WTC11 (cell line): ENCODE measurements at regions of chr1 and their contacts with region 1.

Region 1: DNA sequence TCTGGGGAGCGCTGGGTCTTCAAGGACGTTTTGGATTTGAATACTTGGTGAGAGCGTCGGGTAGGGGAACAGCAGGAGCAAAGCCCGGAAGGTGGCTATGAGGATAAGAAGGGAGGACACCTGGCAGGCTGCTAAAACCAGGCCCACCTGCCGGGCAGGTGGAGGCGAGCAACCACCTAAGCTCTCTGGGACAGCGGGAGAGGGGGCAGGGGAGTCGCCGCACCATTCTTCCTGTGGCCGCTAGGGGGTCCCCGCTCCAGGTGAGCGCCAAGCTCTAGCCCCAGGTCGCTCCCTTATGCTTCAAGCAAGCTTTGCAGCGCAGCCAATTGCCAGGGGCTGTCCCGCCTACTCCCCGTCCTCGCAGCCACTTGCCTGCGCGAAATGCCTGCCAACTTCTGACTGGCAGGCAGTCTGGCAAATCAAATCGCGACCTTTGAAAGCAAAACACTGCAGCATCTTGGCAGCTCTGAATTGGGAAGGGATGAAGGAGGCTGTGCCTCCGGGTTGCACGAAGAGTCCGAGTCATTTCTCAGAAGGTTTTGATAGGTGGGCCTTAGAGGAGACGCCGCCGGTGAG is at the start of gene NIPAL3:
- DNase-seq: peak; percentile 99
- ATAC-seq: peak; percentile 94
- H3K4me3 Mint-ChIP-seq: peak within 1 kb of the TSS; percentile 93
- H3K27ac Mint-ChIP-seq: peak within 1 kb of the TSS; percentile 89
- H3K4me1 Mint-ChIP-seq: peaks cover 36% of the 10 kb centered on the region
- H3K27me3 Mint-ChIP-seq: no peaks in the 10 kb centered on the region
- CTCF ChIP-seq: peak; percentile 86
- total RNA-seq, gene NIPAL3: 11.2 to 11.3 TPM (median 11.2 TPM) in 3 replicates

Region 2: DNA sequence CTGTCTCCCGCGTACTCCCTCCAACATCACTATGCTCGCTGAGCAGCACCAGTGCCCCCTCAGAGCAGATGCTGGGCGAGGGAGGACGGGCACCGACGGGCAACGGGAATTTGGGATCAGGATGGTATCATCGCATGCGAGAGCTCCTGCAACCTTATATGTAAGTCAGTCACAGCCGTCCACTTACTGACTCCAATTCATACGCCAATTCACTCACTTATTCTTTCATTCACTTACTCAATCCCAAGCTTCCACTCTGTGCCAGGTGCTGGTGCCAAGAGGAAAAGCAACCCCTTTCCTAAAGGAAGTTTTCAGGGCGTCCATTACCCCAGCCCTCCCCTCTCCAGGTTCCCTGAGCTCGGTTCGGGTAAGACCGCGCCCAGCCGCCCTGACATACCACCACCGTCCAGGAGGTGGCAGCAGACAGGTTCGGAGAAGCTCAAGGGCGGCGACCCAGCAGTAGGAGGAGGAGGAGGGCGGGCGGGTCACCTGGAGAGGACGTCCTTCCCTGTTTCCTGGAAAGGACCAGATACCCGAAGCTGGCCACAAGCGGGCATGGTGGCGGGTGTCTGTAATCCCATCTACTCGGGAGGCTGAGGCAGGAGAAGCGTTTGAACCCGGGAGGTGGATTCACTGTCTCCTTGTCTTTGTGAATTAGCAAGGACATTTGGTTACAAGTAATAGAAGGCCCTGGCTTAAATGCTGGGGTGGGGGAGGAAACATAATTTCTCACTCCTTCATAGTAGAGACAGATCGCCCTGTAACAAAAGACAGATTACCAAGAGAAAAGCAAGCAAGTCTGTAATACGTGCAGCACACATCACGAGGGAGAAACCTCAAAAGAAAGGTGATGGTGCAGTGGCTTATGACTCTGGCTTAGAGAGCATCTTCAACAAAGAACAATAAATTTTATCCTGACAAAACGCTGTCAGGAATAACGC is 264.9 kb before region 1 on chr1:
- CTCF ChIA-PET with region 1: interaction called, 17 read pairs
- POLR2A ChIA-PET with region 1: interaction called, 3 read pairs
- DNase-seq: peak; percentile 99
- ATAC-seq: peak; percentile 84
- H3K4me3 Mint-ChIP-seq: peak overlapping the region; percentile 63
- H3K27ac Mint-ChIP-seq: peak overlapping the region; percentile 99
- H3K4me1 Mint-ChIP-seq: peaks cover 46% of the 10 kb centered on the region
- H3K27me3 Mint-ChIP-seq: no peaks in the 10 kb centered on the region; the same call in 1 of the 2 replicates
- CTCF ChIP-seq: peak; percentile 88

Region 3: GRCh38 chr1:24426744-24427544 is 11.5 kb after region 1 on chr1:
- CTCF ChIA-PET with region 1: interaction called, 21 read pairs
- POLR2A ChIA-PET with region 1: no interaction called
- DNase-seq: no peak
- ATAC-seq: no peak
- H3K4me3 Mint-ChIP-seq: no peak overlapping the region
- H3K27ac Mint-ChIP-seq: no peak overlapping the region
- H3K4me1 Mint-ChIP-seq: peaks cover 22% of the 10 kb centered on the region
- H3K27me3 Mint-ChIP-seq: no peaks in the 10 kb centered on the region
- CTCF ChIP-seq: no peak

Region 4: DNA sequence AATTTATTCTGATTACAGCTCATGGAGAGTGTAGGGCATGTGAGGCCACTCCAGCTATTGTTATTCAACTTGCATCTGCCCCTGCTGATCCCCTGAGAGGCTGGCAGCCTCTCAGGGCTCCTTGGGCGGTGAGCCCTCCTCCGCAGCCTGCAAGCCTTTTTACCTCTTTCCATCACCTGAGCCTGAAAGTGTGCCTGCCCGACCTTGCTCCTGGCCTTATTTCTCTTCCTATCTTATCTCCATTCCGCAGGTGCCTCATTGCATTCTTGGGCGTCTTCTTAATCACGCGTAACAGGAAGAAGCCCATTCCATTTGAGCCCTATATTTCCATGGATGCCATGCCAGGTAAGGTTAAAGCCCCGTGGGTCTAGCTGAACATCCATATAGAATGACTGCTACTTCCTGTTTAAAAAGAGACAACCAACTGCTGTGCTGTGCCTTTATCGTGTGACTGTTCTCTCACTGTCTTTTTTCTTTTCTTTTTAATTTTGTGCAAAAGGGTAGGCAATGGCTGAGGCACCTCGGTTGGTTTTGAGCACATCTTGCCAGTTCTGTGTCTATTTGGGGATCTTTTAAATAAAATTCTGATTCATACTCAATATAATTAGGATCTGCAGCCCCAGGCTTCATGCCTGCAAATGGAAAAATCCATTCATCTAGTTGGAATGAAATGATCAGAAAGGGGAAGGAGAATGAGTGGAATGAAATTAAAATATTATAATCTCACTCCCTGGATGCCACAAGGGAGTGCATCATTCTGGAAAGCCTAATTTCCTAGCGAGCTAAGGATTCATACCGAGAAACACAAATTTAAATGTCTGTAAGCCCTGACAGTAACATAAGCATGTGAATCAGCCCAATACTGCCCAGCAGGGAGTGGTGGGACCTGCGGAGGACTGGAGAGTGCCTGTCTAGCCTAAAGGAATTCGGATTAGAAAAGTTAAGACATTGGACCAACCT is 48.6 kb after region 1 on chr1:
- CTCF ChIA-PET with region 1: interaction called, 18 read pairs
- POLR2A ChIA-PET with region 1: interaction called, 4 read pairs
- DNase-seq: peak; percentile 54
- ATAC-seq: peak; percentile 96
- H3K4me3 Mint-ChIP-seq: peak overlapping the region; percentile 54
- H3K27ac Mint-ChIP-seq: peak overlapping the region; percentile 98
- H3K4me1 Mint-ChIP-seq: peaks cover 51% of the 10 kb centered on the region
- H3K27me3 Mint-ChIP-seq: no peaks in the 10 kb centered on the region
- CTCF ChIP-seq: no peak

Region 5: DNA sequence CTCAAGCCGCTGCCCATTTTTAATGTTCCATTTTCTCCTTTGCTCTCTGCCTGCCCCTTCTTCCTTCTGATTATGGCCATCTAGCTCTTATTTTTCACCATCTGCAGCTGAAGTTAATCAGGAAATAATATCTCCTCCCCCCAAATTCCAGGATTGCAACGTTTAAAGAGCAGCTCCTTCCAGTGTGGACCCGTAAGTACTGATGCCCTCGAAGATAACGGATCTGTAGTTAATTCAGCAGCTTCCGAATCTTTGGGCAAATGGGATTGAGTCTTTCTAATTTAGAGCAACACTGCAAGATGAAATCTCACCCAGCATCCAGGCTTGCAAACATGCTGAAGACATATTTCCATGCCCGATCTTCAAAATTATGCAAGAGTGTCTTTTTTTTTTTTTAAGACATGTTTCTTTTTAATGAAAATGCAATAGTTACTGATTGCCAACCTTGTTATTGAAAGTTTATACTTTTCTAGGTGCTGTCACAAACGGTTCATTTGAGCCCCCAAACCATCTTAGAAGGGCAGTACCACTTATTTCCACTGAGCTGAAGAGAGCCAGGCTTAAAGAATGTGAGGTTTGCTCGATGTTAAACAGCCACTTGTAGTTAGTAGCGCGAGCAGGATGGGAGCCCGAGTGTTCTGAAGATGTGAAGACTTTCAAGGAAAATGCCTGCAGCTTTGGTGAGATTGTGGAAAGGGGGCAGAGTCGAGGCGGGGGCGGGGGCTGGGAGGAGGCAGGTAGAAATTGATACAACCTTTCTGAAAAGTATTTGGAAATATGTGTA is 76.3 kb after region 1 on chr1:
- CTCF ChIA-PET with region 1: interaction called, 14 read pairs
- POLR2A ChIA-PET with region 1: no interaction called
- DNase-seq: no peak
- ATAC-seq: peak; percentile 76
- H3K4me3 Mint-ChIP-seq: no peak overlapping the region
- H3K27ac Mint-ChIP-seq: no peak overlapping the region
- H3K4me1 Mint-ChIP-seq: peaks cover 5% of the 10 kb centered on the region; the same call in 1 of the 2 replicates
- H3K27me3 Mint-ChIP-seq: peaks cover 7% of the 10 kb centered on the region
- CTCF ChIP-seq: no peak

Region 6: GRCh38 chr1:24526940-24527542 is 111.6 kb after region 1 on chr1:
- CTCF ChIA-PET with region 1: interaction called, 12 read pairs
- POLR2A ChIA-PET with region 1: no interaction called
- DNase-seq: no peak
- ATAC-seq: peak; percentile 41; the same call in 1 of the 2 replicates
- H3K4me3 Mint-ChIP-seq: no peak overlapping the region
- H3K27ac Mint-ChIP-seq: no peak overlapping the region
- H3K4me1 Mint-ChIP-seq: no peaks in the 10 kb centered on the region
- H3K27me3 Mint-ChIP-seq: no peaks in the 10 kb centered on the region
- CTCF ChIP-seq: peak; percentile 42

Region 7: DNA sequence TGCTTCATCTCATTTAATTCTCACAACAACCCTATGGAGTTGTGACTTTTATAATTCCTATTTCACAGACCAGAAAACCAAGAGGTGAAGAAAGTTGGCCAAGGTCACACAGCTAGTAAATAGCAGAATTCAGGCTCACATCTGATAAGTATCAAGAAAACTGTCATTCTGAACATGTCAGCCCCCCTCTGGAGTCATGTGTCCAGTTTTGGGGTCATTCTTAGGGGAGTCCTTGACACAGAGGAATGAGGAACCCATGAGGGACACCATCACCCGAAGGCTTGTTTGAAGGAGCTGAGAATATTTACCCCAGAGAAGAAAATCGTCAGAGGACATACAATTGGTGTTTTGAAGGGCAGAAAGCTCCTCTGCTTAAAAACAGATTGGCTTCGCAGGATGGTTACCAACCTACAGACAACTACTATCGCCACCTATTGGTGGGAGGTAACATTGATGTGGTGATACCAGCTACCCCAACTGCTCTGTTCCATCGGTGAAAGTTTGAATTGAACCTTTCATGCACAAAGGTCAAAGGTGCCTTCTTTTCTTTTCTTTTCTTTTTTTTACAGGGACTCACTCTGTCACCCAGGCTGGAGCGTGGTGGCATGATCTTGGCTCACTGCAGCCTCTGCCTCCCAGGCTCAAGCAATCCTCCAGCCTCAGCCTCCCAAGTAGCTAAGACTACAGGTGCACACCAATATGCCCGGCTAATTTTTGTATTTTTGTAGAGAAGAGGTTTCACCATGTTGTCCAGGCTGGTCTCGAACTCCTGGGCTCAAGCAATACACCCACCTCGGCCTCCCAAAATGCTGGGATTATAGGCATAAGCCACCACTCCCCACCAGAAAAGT is 171.8 kb after region 1 on chr1:
- CTCF ChIA-PET with region 1: interaction called, 41 read pairs
- POLR2A ChIA-PET with region 1: no interaction called
- DNase-seq: no peak
- ATAC-seq: peak; percentile 88
- H3K4me3 Mint-ChIP-seq: no peak overlapping the region
- H3K27ac Mint-ChIP-seq: no peak overlapping the region
- H3K4me1 Mint-ChIP-seq: peaks cover 5% of the 10 kb centered on the region
- H3K27me3 Mint-ChIP-seq: no peaks in the 10 kb centered on the region
- CTCF ChIP-seq: peak; percentile 71